Ovary (tissue), 10 donors: ENCODE measurements at regions of chr1 and their contacts with region 1.

Region 1: GRCh38 chr1:150089846-150090520 is 22.4 kb downstream of the VPS45 start:
- DNase-seq: no peak
- H3K4me3 ChIP-seq: no peak overlapping the region
- H3K27ac ChIP-seq: no peak overlapping the region
- H3K4me1 ChIP-seq: no peaks in the 10 kb centered on the region
- H3K27me3 ChIP-seq: no peaks in the 10 kb centered on the region
- CTCF ChIP-seq: no peak
- EP300 ChIP-seq: no peak
- POLR2A ChIP-seq: no peak

Region 2: DNA sequence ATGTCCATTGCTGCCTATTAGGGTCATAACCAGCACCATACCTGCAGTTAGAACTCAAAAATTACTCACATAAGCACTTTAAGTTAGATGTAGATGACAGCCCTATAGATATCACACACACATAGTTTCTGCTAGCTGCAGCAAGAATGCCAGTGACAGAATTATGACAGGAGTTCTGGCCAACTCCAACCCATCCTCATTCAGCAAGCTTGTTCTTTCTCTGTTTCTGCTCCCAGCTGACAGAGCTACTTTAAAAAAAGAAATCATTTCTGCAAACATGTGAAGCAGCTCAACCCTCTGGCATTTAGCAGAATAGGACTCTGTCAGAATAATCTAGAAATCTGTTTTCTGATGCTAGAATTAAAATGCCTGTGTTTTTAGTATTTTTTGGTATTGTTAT is 55.6 kb before region 1 on chr1:
- intact Hi-C with region 1: no loop called
- DNase-seq: no peak
- H3K4me3 ChIP-seq: no peak overlapping the region
- H3K27ac ChIP-seq: no peak overlapping the region
- H3K4me1 ChIP-seq: no peaks in the 10 kb centered on the region
- H3K27me3 ChIP-seq: no peaks in the 10 kb centered on the region
- CTCF ChIP-seq: no peak
- EP300 ChIP-seq: no peak
- POLR2A ChIP-seq: no peak

Region 3: DNA sequence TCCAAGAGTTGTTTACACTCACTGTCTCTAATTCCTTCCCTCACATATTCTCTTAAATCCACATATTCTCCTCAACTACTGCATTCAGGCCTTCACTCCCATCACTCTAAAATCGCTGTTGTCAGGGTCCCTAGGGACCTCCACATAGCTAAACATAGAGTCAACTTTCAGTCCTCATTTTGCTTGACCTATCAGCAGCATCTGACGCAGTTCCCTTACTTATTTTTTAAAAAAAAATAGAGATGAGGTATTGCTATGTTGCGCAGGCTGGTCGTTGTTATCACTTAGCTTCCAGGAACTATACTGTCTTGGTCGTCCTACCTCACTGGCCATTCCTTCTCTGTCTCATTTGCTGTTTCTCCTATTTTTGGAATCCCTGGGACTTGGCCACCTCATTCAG is 48.1 kb after region 1 on chr1:
- intact Hi-C with region 1: loop called in 2 of 4 experiments (anchors 10 kb)
- DNase-seq: no peak
- H3K4me3 ChIP-seq: no peak overlapping the region
- H3K27ac ChIP-seq: no peak overlapping the region
- H3K4me1 ChIP-seq: no peaks in the 10 kb centered on the region
- H3K27me3 ChIP-seq: no peaks in the 10 kb centered on the region
- CTCF ChIP-seq: no peak
- EP300 ChIP-seq: no peak
- POLR2A ChIP-seq: no peak

Region 4: GRCh38 chr1:150149271-150150132 is 59.5 kb after region 1 on chr1 and contains the start of gene PLEKHO1:
- intact Hi-C with region 1: loop called in 1 of 4 experiments (anchors 10 kb)
- DNase-seq: peak; percentile 89 to 93 (median 90)
- H3K4me3 ChIP-seq: peak within 1 kb of the TSS; percentile 75
- H3K27ac ChIP-seq: peak within 1 kb of the TSS; percentile 83 to 97
- H3K4me1 ChIP-seq: peaks cover 17% of the 10 kb centered on the region
- H3K27me3 ChIP-seq: no peaks in the 10 kb centered on the region
- CTCF ChIP-seq: no peak
- EP300 ChIP-seq: no peak
- POLR2A ChIP-seq: peak; percentile 87
- total RNA-seq, gene PLEKHO1: 40.6 to 68.9 (median 55.6) TPM